Activated CD4-positive, alpha-beta T cell treated with anti-CD3 and anti-CD28 coated beads for 36 hours (primary cell): ENCODE measurements at regions of chr12 and their contacts with region 1.

Region 1: DNA sequence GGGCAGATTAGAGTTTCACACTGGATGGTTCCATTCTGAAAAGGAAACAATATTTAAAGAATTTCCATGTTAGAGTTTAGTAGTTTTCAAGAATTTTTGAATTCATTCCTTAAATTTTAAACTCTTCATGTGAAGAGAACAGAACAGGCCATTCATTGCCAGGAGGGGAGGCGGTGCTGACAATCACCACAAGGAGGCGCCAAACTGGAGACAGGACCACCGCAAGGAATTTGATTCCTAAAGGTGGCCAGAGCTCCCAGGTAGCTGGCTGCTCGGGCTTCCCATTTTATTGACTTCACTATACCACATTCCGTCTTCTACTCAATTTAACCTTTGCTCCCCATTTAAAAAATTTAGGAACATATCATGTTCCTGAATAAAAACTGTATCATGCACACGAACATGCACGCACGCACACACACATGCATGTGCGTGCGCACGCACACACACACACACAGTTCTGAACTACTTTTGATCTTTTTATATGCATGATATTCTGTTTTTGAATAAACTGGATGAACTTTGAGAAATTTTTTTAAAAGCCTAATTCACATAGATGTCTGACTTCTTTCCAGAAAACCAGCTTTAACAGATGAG is 101.2 kb downstream of the NELL2 start:
- DNase-seq: peak; percentile 78
- ATAC-seq: no peak
- H3K4me3 Mint-ChIP-seq: no peak overlapping the region
- H3K27ac Mint-ChIP-seq: no peak overlapping the region
- H3K4me1 Mint-ChIP-seq: no peaks in the 10 kb centered on the region
- H3K27me3 Mint-ChIP-seq: no peaks in the 10 kb centered on the region

Region 2: DNA sequence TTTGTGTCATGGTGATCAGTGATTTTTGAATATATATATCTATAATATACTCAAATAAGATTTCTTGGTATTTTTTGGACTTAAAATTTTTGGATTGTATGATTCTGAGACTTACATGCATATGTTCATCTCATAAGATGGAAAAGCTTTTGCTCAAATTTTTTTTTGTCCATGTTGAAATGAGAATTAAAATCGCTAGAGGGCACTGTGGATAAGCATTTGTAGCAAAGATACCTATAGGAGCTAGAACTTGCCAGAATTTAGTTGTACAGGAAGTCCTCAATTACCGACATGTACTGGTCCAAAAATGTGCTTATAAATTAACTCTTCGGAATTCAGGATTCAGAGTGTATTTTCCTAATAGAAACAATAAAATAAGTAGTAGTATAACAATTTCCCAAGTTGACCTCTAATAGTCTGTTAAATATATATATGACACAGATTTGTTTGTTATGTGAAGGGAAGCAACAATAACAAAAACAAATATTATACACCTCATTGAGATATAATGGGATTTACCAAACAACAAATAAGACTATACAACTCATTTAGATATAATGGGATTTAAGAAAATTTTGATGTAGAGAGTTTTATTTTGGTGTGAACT is 759.5 kb before region 1 on chr12:
- CTCF ChIA-PET with region 1: interaction called, 5 read pairs
- POLR2A ChIA-PET with region 1: no interaction called
- intact Hi-C with region 1: loop called in 1 of 2 experiments (anchors 10 kb)
- DNase-seq: no peak
- ATAC-seq: no peak
- H3K4me3 Mint-ChIP-seq: no peak overlapping the region
- H3K27ac Mint-ChIP-seq: no peak overlapping the region
- H3K4me1 Mint-ChIP-seq: no peaks in the 10 kb centered on the region
- H3K27me3 Mint-ChIP-seq: no peaks in the 10 kb centered on the region